ENCODE measurements at regions of chr4 and their contacts with region 1.

Region 1: DNA sequence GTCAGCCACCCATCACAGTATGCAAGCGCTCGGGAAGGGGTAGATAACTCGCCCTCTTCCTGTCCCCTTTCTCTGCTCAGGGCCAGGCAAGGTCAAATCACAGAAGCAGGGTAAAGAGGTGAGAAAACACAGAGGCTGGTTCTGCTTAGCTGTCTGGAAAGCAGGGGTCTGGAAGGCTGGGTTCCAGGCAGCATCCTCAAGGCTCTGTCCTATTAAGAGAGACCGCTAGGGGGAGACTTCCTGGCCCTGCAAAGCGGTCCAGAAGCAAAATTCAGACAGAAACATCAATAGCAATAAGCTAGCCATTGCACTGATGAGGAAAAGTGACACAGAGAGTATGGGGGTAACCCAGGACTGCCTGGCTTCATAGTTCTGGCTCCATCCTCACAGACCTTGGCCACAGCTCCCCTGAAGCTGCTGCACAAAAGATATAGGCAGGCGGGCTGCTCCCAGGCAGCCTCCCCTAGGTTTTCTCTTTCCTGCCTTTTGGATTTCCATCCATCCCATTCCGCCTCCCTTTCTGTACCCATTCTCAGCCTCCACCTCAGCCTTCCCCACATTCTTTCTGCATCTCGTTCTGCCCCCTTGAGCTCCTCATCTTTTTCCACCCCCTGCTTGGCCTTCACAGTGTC is 308.5 kb downstream of the EVC2 start:
- DNase-seq: no peak
- H3K4me3 ChIP-seq: no peak overlapping the region
- H3K27me3 ChIP-seq: no peaks in the 10 kb centered on the region
- CTCF ChIP-seq: peak; percentile 85

Region 2: DNA sequence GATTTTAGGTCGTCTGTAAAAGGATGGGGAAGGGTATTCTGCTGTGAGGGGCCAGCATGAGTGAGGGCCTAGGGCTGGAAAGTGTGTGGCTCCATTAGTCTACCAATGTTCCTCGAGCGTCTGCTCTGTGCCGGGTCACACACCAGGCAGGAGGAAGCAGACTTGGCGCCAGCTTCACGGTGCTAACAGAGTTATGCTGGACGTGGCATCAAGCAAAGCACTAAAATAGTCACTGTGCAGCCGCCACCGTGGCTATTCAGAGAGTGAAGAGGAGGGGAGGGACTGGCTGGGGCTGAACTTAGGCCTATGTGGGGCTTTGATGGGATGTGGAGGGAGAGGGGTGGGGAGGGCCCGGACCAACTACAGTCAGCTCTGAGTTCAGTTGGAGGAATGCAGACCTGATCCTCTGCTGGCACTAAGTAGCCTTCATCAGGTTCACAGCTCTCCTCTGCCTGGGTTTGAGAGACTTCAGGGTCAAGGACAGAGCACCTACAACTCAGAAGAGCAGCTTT is 624.4 kb before region 1 on chr4:
- CTCF ChIA-PET with region 1: no interaction called
- POLR2A ChIA-PET with region 1: no interaction called
- DNase-seq: no peak
- H3K4me3 ChIP-seq: no peak overlapping the region
- H3K27me3 ChIP-seq: peaks cover 1% of the 10 kb centered on the region; the same call in 1 of the 2 replicates
- CTCF ChIP-seq: no peak

Region 3: GRCh38 chr4:5389756-5390310 is 10.1 kb before region 1 on chr4:
- CTCF ChIA-PET with region 1: interaction called, 12 read pairs
- POLR2A ChIA-PET with region 1: no interaction called
- DNase-seq: no peak
- H3K4me3 ChIP-seq: no peak overlapping the region
- H3K27me3 ChIP-seq: no peaks in the 10 kb centered on the region
- CTCF ChIP-seq: no peak

Region 4: GRCh38 chr4:5409972-5410618 is 10.2 kb after region 1 on chr4:
- CTCF ChIA-PET with region 1: interaction called, 31 read pairs
- POLR2A ChIA-PET with region 1: no interaction called
- DNase-seq: no peak
- H3K4me3 ChIP-seq: no peak overlapping the region
- H3K27me3 ChIP-seq: no peaks in the 10 kb centered on the region
- CTCF ChIP-seq: no peak; the same call in none of the 2 replicates

Region 5: DNA sequence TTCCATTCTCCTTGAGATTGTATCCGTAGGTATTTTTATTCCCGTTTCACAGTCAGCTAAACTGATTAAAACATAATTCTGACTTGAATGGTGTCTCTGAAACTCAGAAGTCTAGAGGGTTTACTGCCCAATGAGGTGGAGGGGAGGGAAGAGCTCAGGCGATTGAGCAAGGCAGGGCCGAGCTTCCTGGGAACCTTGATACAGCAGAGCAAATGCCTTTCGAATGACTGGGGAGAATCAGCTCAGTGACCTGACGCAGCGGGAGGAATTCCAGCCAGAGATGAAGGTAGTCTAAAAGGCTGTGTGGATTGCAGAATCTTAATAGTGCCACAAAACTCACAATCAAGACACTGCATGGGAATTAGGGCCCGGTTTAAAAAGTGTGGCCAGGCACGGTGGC is 74.8 kb after region 1 on chr4:
- CTCF ChIA-PET with region 1: no interaction called
- POLR2A ChIA-PET with region 1: no interaction called
- DNase-seq: no peak
- H3K4me3 ChIP-seq: no peak overlapping the region
- H3K27me3 ChIP-seq: no peaks in the 10 kb centered on the region
- CTCF ChIP-seq: no peak